Uterus (tissue), 4 donors: ENCODE measurements at regions of chr20 and their contacts with region 1.

Region 1: DNA sequence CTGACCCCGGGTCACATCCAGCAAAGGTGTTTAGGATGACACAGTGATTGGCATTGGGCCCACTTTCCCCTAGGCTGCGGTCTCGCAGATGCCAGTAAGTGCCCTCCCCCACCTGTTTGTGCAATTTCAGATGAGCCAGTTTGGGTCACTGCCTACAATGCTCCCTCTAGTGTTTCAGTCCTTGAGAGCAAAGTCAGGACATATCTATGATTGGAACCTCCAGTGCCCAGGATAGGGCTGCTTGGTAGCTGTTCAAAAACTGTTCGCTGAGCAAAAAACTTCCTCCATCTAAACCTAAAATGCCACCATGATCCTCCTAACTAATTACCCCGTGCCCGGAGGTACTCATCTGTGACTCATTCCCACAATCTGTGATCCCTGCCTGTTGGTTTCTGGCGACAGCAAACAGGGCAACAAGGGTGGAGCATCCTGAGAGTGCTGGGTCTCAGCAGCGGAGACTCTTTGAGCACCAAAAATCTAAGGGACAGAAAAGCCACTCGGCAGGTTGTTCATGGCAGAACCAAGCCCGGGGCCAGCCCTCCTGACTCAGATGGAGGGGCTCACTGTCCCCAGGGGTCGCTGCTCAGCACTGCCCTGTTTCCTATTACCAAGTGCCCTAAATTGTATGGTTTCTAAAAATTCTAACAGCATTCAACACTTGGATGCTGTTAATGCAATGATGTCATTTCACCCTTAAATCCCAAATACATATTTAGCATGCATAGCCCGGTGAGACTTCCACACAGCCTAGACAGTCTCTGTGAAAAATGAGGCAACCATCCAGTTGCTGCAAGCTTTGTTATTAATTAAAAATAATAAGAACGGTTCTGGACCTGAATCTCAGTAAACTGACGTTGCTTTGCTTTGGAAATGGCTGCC is 5.0 kb downstream of the VSX1 start:
- DNase-seq: peak in 1 of 2 donors; percentile 41
- H3K4me3 ChIP-seq: peak overlapping the region in 1 of 2 donors; percentile 30
- H3K27ac ChIP-seq: no peak overlapping the region
- H3K4me1 ChIP-seq: peaks cover 0 to 7% of the 10 kb centered on the region in 2 donors
- H3K27me3 ChIP-seq: peaks cover 11 to 19% of the 10 kb centered on the region in 2 donors
- CTCF ChIP-seq: peak in 2 of 4 experiments; percentile 11 to 19
- POLR2A ChIP-seq: no peak

Region 2: GRCh38 chr20:24891546-24892393 is 185.2 kb before region 1 on chr20:
- intact Hi-C with region 1: no loop called
- DNase-seq: no peak
- H3K4me3 ChIP-seq: no peak overlapping the region
- H3K27ac ChIP-seq: no peak overlapping the region
- H3K4me1 ChIP-seq: no peaks in the 10 kb centered on the region
- H3K27me3 ChIP-seq: no peaks in the 10 kb centered on the region
- CTCF ChIP-seq: no peak
- POLR2A ChIP-seq: no peak

Region 3: DNA sequence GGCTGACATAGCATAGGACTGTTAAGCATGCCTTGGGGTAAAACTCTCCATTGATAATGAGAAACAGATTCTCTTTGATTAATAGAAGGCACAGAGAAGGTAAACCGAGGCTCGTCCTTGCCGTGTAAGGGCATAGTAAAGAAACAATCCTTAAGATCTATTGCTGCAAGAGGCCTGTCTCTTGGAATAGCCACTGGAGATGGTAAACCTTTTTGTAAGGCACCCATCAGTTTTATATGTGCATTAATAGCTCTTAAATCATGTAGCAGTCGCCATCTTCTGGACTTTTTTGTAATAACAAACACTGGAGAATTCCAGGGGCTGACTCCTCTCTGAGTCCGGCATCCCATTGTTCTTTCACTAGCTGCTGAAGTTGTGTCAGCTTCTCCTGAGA is 322.1 kb after region 1 on chr20:
- intact Hi-C with region 1: loop called (anchors 5 kb)
- DNase-seq: peak; percentile 29 to 41
- H3K4me3 ChIP-seq: no peak overlapping the region
- H3K27ac ChIP-seq: no peak overlapping the region
- H3K4me1 ChIP-seq: no peaks in the 10 kb centered on the region
- H3K27me3 ChIP-seq: no peaks in the 10 kb centered on the region
- CTCF ChIP-seq: peak; percentile 47 to 78 (median 64)
- POLR2A ChIP-seq: no peak